Left cardiac atrium (tissue), 4 donors: ENCODE measurements at regions of chr11 and their contacts with region 1.

Region 1: DNA sequence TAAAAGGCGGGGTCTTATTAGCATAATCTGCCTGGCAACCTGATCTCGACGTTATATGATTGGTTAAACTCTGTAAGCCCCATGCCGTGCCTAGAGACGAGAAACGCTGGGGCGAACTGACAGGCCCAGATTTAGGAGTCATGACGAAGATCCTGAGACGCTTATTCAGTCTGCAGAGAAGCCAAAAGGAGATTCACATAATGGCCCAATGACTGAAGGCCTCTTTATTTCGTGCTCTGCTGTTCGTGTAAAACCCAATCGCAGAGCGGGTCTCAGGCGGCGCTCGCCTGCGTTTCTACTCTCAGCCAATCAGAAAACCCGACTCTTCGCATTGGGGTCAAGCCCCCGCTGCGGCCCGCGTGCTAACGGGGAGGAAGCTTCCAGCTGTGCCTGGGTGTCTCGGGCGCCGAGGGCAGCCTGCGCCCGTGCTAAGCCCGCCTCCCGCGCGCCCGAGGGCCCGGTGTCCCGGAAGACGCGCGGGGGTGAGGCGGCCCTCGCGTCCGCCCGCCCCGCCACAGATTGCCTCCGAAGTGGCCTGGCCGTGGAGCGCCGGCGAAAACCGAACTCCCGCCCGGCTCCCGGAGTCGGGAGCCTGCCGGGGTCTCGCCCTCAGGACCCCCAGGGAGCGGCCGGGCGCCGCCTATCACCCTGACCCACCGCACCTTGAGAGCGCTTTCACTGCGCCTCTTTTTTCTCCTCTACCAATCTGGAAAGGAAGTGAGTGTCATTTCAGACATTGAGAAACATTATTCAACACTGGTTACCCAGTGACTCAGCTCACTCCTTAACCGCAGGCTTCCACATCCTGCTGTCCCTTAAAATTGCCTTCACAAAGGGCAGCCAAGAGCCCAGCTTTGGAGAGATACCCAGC is 446 bp upstream of the PRDM10 start:
- DNase-seq: peak; percentile 94
- ATAC-seq: peak; percentile 90 to 93

Region 2: GRCh38 chr11:130069684-130070108 is 66.6 kb after region 1 on chr11 and contains the start of gene APLP2:
- intact Hi-C with region 1: loop called in 1 of 2 experiments (anchors 2 kb)
- DNase-seq: peak; percentile 100
- ATAC-seq: peak; percentile 92 to 93
- total RNA-seq, gene APLP2: 298 to 322 TPM